Activated T-helper 1 cell treated with anti-CD3 and anti-CD28 coated beads, Interleukin-12 subunit alpha, Interleukin-12 subunit beta, Interleukin-2, Interleukin-4 antibody, amounts not matched to agents 30 ng/mL and 10 ng/mL and 1 ng/mL, durations not matched to agents 14 hours and 24 hours and 36 hours (primary cell): ENCODE measurements at regions of chr11 and their contacts with region 1.

Region 1: GRCh38 chr11:75328426-75329277 is 22.8 kb downstream of the ARRB1 start:
- DNase-seq: peak; percentile 58
- H3K4me3 Mint-ChIP-seq: peak overlapping the region; percentile 31
- H3K27ac Mint-ChIP-seq: peak overlapping the region; percentile 74
- H3K4me1 Mint-ChIP-seq: peaks cover 65% of the 10 kb centered on the region
- H3K27me3 Mint-ChIP-seq: peaks cover 2% of the 10 kb centered on the region

Region 2: GRCh38 chr11:75280227-75280701 is 48.4 kb before region 1 on chr11:
- intact Hi-C with region 1: loop called (anchors 1 kb)
- DNase-seq: peak; percentile 68
- H3K4me3 Mint-ChIP-seq: no peak overlapping the region
- H3K27ac Mint-ChIP-seq: no peak overlapping the region
- H3K4me1 Mint-ChIP-seq: peaks cover 37% of the 10 kb centered on the region
- H3K27me3 Mint-ChIP-seq: no peaks in the 10 kb centered on the region

Region 3: GRCh38 chr11:75298191-75298975 is 30.3 kb before region 1 on chr11:
- intact Hi-C with region 1: no loop called
- DNase-seq: no peak
- H3K4me3 Mint-ChIP-seq: no peak overlapping the region
- H3K27ac Mint-ChIP-seq: no peak overlapping the region
- H3K4me1 Mint-ChIP-seq: no peaks in the 10 kb centered on the region
- H3K27me3 Mint-ChIP-seq: peaks cover 2% of the 10 kb centered on the region

Region 4: DNA sequence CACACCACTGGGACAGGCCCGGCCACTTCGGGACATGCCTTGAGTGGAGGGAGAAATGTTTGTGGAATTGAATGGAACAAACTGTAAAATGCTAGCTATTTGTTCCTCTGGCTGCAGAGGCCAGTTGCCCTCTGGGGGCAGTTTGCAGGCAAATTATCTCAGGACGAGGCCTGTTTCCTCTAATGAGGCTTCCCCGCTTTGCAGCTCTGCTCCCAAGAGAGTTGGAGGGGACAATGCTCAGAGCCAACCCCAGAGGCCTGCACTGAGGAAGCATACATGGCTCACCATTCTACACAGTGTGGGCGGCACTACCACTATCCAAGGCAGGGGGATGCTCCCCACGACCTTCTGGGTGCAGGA is 11.4 kb after region 1 on chr11:
- intact Hi-C with region 1: loop called (anchors 1 kb)
- DNase-seq: no peak
- H3K4me3 Mint-ChIP-seq: peak overlapping the region; percentile 73
- H3K27ac Mint-ChIP-seq: peak overlapping the region; percentile 91
- H3K4me1 Mint-ChIP-seq: peaks cover 80% of the 10 kb centered on the region
- H3K27me3 Mint-ChIP-seq: no peaks in the 10 kb centered on the region

Region 5: DNA sequence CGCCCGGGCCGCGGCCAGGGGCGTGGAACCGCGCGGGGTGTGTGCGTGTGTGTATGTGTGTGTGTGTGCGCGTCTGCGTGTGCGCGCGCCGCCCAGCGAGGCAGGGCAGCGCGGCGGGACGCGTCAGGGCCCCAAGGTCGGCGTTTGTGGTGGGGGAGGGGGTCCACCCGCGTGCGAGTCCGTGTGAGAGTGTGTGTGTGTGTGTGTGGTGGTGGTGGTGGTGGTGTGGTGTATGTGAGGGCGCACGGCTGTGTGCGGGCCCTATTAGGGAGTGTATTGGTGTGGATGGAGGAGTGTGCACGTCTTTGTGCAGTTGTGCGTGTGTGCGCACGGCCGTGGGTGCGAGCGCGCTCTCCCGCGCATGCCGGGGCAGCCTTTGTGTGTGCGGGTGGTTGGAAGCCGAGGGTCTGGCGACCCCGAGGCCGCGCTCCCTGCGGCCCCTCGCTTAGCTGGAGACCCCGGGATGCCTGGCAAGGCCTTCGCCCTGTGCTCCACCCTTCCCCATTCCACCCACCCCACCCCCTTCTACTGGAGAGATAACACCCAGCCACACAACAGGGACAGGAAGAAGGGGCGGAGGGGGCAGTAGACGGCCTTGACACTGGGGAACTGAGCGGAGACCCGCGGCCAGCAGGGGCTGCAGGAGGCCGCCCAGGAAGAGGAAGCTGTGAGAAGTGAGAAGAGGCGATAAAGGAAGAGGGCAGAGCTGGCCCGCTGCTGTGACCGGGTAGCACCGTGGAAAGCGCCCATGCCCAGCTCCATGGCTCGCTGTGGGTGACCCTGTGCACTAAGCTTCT is 23.3 kb after region 1 on chr11:
- intact Hi-C with region 1: loop called (anchors 1 kb)
- DNase-seq: peak; percentile 58
- H3K4me3 Mint-ChIP-seq: peak overlapping the region; percentile 85
- H3K27ac Mint-ChIP-seq: peak overlapping the region; percentile 80
- H3K4me1 Mint-ChIP-seq: peaks cover 52% of the 10 kb centered on the region
- H3K27me3 Mint-ChIP-seq: peaks cover 8% of the 10 kb centered on the region

Region 6: GRCh38 chr11:75532200-75533048 is 203.8 kb after region 1 on chr11:
- intact Hi-C with region 1: loop called (anchors 1 kb)
- DNase-seq: peak; percentile 74
- H3K4me3 Mint-ChIP-seq: peak overlapping the region; percentile 1
- H3K27ac Mint-ChIP-seq: no peak overlapping the region
- H3K4me1 Mint-ChIP-seq: peaks cover 35% of the 10 kb centered on the region
- H3K27me3 Mint-ChIP-seq: peaks cover 12% of the 10 kb centered on the region